PC-9 (cell line): ENCODE measurements at regions of chr11 and their contacts with region 1.

Region 1: GRCh38 chr11:4072668-4073285 is 21.8 kb upstream of the RRM1 start:
- DNase-seq: peak; percentile 20 to 43
- H3K4me3 ChIP-seq: no peak overlapping the region
- H3K27ac ChIP-seq: no peak overlapping the region
- H3K4me1 ChIP-seq: no peaks in the 10 kb centered on the region
- H3K27me3 ChIP-seq: no peaks in the 10 kb centered on the region
- CTCF ChIP-seq: peak; percentile 76

Region 2: GRCh38 chr11:3609416-3610265 is 463.1 kb before region 1 on chr11:
- CTCF ChIA-PET with region 1: interaction called, 19 read pairs
- POLR2A ChIA-PET with region 1: no interaction called
- intact Hi-C with region 1: no loop called
- DNase-seq: peak in 1 of 2 experiments; percentile 12
- H3K4me3 ChIP-seq: no peak overlapping the region
- H3K27ac ChIP-seq: no peak overlapping the region
- H3K4me1 ChIP-seq: no peaks in the 10 kb centered on the region
- H3K27me3 ChIP-seq: no peaks in the 10 kb centered on the region
- CTCF ChIP-seq: peak; percentile 86

Region 3: DNA sequence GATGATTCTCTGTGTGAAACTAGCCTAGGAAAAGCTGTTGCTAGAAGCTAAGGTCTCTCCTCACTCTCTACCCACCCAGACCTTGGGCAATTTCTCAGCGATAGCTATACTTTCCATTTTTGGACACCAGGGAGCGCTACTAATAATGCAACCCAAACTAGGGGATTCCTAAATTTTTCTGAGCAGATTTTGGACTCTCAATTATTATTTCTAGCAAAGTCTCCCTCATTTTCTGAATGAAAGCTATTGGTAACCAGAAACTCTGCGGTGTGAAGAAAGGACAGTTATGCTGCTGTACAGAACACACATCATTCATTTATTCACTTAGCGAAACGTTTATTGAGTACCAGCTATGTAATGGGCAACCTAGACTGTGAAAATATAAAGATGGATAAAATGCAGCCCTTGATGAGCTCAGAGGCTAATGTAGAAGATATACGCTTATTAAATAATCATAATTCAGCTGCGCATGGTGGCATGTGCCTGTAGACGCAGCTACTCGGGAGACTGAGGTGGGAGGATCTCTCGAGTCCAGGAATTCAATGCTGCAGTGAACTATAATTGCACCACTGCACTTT is 223.4 kb before region 1 on chr11:
- CTCF ChIA-PET with region 1: interaction called, 19 read pairs
- POLR2A ChIA-PET with region 1: interaction called, 10 read pairs
- intact Hi-C with region 1: loop called (anchors 1 kb)
- DNase-seq: peak in 1 of 2 experiments; percentile 12
- H3K4me3 ChIP-seq: no peak overlapping the region
- H3K27ac ChIP-seq: no peak overlapping the region
- H3K4me1 ChIP-seq: peaks cover 2% of the 10 kb centered on the region; the same call in 1 of the 2 replicates
- H3K27me3 ChIP-seq: no peaks in the 10 kb centered on the region
- CTCF ChIP-seq: peak; percentile 72

Region 4: DNA sequence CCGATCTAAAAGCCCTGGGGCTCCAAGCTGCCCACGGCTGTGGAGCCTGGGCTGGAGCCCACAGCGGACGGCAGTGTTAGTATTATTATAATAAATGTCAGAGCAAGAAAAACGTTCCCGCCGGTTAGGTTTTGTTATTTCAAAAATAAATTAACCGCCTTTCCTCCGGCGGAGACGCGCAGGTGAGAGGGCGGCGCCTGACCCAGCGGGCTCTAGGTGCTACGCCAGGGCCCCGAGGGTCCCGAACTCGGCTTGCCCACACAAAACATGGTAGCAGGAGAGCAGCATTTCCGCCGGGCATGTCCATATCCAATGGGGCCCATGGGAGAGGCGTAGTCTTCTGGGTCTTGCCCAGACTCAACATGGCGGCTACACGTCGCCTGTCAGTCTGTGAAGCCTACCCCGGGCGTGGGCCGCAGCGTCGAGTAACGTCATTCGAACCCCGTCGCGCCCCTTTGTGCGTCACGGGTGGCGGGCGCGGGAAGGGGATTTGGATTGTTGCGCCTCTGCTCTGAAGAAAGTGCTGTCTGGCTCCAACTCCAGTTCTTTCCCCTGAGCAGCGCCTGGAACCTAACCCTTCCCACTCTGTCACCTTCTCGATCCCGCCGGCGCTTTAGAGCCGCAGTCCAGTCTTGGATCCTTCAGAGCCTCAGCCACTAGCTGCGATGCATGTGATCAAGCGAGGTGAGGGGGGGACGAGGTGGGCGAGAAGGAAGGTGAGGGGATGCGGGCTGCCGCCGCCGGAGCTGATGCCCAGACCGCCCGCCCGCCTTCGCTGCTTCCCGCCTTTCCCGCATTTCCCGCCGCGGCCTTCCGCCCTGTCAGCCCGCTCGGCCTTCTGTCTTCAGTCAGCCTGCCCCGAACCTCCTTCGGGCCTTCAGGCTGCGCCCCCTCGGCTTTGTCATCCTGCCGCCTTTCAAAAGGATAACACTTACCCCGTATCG is 21.8 kb after region 1 on chr11 and contains the start of gene RRM1:
- CTCF ChIA-PET with region 1: no interaction called
- POLR2A ChIA-PET with region 1: no interaction called
- intact Hi-C with region 1: no loop called
- DNase-seq: peak; percentile 66 to 78
- H3K4me3 ChIP-seq: peak within 1 kb of the TSS; percentile 68
- H3K27ac ChIP-seq: peak within 1 kb of the TSS; percentile 66
- H3K4me1 ChIP-seq: peaks cover 11% of the 10 kb centered on the region; the same call in 1 of the 2 replicates
- H3K27me3 ChIP-seq: no peaks in the 10 kb centered on the region
- CTCF ChIP-seq: no peak
- total RNA-seq, gene RRM1: 57.7 and 68.1 TPM in 2 replicates